Activated CD4-positive, alpha-beta memory T cell treated with anti-CD3 and anti-CD28 coated beads for 36 hours (primary cell): ENCODE measurements at regions of chrX and their contacts with region 1.

Region 1: GRCh38 chrX:13087322-13088155 is 43.1 kb upstream of the FAM9C start:
- DNase-seq: peak; percentile 76
- H3K4me3 Mint-ChIP-seq: peak overlapping the region; percentile 77
- H3K27ac Mint-ChIP-seq: peak overlapping the region; percentile 99
- H3K4me1 Mint-ChIP-seq: peaks cover 67% of the 10 kb centered on the region
- H3K27me3 Mint-ChIP-seq: no peaks in the 10 kb centered on the region

Region 2: DNA sequence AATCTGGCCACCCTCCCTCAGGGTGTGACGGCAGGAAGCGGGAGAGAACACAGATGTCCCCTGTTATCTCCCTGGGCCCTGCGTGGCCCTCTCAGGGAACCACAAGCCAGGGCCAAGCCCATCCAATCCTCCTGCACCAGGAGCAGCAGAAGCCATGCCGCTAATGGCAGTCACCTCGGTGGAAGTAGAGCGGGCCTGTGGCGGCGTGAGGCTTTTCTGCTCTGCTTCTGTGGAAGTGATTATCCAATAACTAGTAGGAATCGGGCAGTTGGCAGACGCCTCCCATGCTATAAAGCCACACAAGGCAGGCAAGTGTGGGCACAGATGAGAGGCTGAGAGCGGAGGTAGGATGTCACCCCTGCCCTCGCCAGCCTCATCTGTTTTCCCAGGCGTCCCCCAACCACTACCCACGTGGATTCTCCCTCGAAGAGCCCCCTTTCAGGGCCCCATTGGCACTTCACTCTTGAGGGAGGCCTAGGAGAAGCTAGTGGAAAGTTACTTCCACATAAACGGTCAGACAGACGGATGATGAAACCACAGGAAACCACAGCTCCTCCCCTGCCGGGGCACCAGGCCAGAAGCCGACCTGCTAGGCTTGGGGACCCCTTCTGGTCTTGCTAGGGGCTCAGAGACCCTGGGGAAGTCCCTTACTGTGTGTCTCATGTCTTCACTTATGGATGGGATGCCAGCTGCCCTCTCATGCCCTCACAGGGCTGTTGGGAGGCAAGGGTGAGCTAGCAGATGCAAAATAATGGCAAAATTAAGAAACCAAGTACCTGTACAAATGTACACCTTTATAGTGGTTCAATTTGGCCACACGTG is 131.4 kb before region 1 on chrX:
- CTCF ChIA-PET with region 1: interaction called, 34 read pairs
- POLR2A ChIA-PET with region 1: interaction called, 23 read pairs
- intact Hi-C with region 1: loop called (anchors 1 kb)
- DNase-seq: peak; percentile 83
- H3K4me3 Mint-ChIP-seq: peak overlapping the region; percentile 85
- H3K27ac Mint-ChIP-seq: peak overlapping the region; percentile 99
- H3K4me1 Mint-ChIP-seq: peaks cover 64% of the 10 kb centered on the region
- H3K27me3 Mint-ChIP-seq: no peaks in the 10 kb centered on the region

Region 3: GRCh38 chrX:13000301-13000811 is 87.2 kb before region 1 on chrX:
- CTCF ChIA-PET with region 1: interaction called, 12 read pairs
- POLR2A ChIA-PET with region 1: interaction called, 17 read pairs
- intact Hi-C with region 1: loop called (anchors 1 kb)
- DNase-seq: peak; percentile 59
- H3K4me3 Mint-ChIP-seq: peak overlapping the region; percentile 60
- H3K27ac Mint-ChIP-seq: peak overlapping the region; percentile 94
- H3K4me1 Mint-ChIP-seq: peaks cover 70% of the 10 kb centered on the region
- H3K27me3 Mint-ChIP-seq: no peaks in the 10 kb centered on the region

Region 4: GRCh38 chrX:13167481-13168231 is 80.1 kb after region 1 on chrX:
- CTCF ChIA-PET with region 1: no interaction called
- POLR2A ChIA-PET with region 1: no interaction called
- intact Hi-C with region 1: loop called (anchors 2 kb)
- DNase-seq: peak; percentile 34
- H3K4me3 Mint-ChIP-seq: peak overlapping the region; percentile 30
- H3K27ac Mint-ChIP-seq: peak overlapping the region; percentile 65
- H3K4me1 Mint-ChIP-seq: peaks cover 19% of the 10 kb centered on the region
- H3K27me3 Mint-ChIP-seq: no peaks in the 10 kb centered on the region

Region 5: DNA sequence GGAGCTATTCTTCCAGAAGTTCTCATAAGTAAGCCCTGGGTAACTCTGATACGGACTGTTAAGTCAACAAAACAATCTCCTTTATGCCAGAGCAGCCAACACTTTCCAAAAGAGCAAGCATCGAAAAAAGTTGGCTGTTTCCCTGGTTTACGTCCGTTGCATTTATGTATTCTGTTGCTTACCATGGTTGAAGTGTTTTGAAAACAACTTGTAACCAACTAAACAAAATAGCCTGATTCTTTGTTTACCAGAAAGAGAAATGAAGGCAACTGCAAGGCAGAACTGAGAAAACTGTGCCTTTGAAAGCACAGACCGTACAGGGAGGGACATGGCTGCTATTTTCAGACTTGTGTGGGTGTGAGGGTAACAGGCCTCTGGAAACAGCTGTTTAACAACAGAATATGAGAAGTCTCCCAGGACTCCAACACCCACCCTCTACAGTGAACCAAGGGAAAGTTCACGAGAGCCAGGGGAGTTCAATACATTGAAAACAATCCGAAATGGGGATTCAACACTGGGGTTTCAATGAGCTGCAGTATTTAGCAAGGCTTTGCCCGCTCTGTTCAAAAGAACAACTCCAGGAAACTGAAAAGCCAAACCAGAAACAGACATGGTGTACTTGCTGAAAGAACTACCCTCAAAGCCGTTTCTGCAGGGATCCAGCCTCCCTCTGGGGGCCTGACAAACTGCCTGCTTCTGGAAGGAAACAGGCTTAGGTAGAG is 386.1 kb after region 1 on chrX:
- CTCF ChIA-PET with region 1: interaction called, 5 read pairs
- POLR2A ChIA-PET with region 1: no interaction called
- intact Hi-C with region 1: loop called (anchors 5 kb)
- DNase-seq: no peak
- H3K4me3 Mint-ChIP-seq: peak overlapping the region; percentile 62
- H3K27ac Mint-ChIP-seq: peak overlapping the region; percentile 53
- H3K4me1 Mint-ChIP-seq: peaks cover 24% of the 10 kb centered on the region
- H3K27me3 Mint-ChIP-seq: no peaks in the 10 kb centered on the region

Region 6: DNA sequence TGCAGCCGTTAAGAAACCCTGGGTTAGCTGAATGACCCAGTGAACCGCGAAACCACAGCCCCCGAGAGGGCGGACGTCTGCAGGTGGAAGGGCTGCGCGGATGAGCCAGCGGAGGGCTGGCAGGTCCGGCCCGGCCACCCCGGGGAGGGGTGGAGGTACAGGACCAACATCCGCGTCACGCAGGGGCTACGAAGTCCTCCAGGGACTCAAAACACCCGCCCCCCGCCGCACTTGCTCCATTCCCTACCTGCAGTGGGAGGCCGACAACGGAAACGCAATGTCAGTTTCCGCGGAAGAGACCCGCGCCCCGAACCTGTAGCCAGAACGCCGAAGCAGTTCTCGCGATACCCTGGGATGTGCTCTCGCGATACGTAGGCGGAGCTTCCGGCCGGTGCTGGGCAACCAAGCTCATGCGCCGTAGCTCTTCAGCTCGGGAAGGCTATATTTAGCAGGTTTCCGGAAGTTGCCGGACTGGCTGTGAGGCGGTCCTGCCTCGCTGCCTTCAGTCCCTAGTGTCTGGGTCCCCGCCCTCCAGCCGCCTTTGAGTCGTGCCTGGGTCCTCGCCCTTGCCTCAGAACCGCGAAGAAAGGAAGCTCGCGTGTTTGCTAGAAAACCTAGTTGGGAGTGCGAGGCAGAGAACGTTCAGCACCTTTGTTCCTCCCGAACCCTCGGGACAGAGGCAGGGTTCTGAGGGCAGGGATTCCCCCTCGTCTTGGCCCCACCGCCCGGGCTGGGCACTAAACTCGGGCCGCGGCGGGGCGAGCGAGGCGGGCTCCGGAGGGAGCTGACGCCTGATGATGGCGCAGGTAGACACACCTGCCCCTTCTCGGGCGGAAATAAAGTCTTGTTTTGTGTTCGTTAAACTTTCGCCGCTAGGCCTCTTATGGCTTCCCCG is 647.0 kb after region 1 on chrX and contains the starts of genes OFD1 and TRAPPC2:
- CTCF ChIA-PET with region 1: no interaction called
- POLR2A ChIA-PET with region 1: interaction called, 3 read pairs
- intact Hi-C with region 1: loop called (anchors 5 kb)
- DNase-seq: peak; percentile 93
- H3K4me3 Mint-ChIP-seq: peak within 1 kb of the TSS; percentile 92
- H3K27ac Mint-ChIP-seq: peak within 1 kb of the TSS; percentile 96
- H3K4me1 Mint-ChIP-seq: peaks cover 45% of the 10 kb centered on the region
- H3K27me3 Mint-ChIP-seq: no peaks in the 10 kb centered on the region
- total RNA-seq, gene OFD1: 24.5 to 30.9 TPM
- total RNA-seq, gene TRAPPC2: 14.1 to 16.1 TPM

Region 7: DNA sequence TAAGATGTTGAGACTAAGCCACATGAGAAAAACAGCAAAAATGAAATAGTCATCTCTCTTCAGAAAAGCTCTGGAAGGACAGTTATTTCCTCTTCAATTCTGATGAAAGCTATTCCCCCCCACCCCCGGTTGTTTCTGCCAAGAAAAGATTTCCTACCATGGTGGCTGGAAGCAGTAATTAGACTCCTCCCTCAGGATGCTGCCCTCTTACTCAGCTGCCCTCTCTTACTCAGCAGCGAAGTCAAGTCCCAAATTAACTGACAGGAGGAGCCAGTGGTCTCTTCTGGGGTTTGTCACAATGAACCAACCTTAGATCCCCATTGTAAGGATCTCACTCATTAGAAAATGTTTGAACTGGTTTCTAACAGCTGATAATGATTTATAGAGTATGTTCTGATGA is 691.4 kb after region 1 on chrX:
- CTCF ChIA-PET with region 1: no interaction called
- POLR2A ChIA-PET with region 1: no interaction called
- intact Hi-C with region 1: no loop called
- DNase-seq: peak; percentile 30
- H3K4me3 Mint-ChIP-seq: no peak overlapping the region
- H3K27ac Mint-ChIP-seq: peak overlapping the region; percentile 42
- H3K4me1 Mint-ChIP-seq: peaks cover 6% of the 10 kb centered on the region
- H3K27me3 Mint-ChIP-seq: no peaks in the 10 kb centered on the region